SK-N-SH (cell line): ENCODE measurements at regions of chr14 and their contacts with region 1.

Region 1: DNA sequence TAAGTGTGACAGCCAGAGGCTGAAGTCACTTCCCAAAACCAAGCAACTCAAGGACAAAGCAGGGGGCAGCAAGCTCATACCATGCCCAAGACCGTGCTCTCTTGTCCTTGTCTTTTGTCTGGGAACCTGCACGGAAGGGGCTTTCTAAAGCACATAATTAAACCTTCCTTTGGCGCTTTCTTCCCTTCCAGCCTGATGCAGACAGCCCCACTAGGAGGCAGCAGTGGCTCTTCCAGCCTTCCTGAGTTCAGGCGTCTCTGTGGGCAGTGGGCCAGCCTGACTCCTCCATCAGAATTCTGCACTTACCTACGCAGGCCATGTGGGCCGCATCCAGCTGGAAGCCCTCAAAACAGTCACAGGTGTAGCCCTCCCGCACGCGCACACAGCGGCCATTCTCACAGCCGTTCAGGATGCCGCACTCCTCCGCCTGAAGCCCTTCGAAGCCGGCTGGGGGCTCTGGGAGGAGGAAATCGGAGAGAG is 7.6 kb downstream of the ISCA2 start:
- DNase-seq: peak; percentile 87
- H3K4me3 ChIP-seq: peak overlapping the region in 1 of 2 experiments; percentile 49; a peak in 1 of 4 replicates
- H3K27ac ChIP-seq: no peak overlapping the region
- H3K4me1 ChIP-seq: peaks cover 0 to 13% of the 10 kb centered on the region in 2 experiments; a peak in 1 of 4 replicates
- H3K27me3 ChIP-seq: no peaks in the 10 kb centered on the region
- CTCF ChIP-seq: peak; percentile 61
- EP300 ChIP-seq: no peak
- RAD21 ChIP-seq: peak; percentile 91

Region 2: DNA sequence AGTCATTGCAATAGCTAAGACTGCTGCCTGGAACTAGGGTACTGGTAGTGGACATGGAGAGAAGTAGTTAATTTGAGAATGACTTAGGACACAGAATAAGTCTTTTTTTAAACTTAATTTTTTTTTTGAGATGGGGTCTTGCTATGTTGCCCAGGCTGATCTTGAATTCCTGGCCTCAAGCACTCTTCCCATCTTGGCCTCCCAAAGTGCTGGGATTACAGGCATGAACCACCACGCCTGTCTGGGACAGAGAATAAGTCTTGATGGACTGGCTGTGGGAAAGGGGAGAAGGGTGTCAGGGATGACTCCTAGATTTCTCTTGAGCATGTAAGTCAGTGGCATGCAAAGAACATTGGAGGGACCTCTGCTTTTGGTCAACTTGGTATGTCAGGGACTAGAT is 373.5 kb before region 1 on chr14:
- CTCF ChIA-PET with region 1: no interaction called
- POLR2A ChIA-PET with region 1: no interaction called
- DNase-seq: no peak
- H3K4me3 ChIP-seq: no peak overlapping the region
- H3K27ac ChIP-seq: no peak overlapping the region
- H3K4me1 ChIP-seq: no peaks in the 10 kb centered on the region
- H3K27me3 ChIP-seq: no peaks in the 10 kb centered on the region
- CTCF ChIP-seq: no peak
- EP300 ChIP-seq: no peak
- RAD21 ChIP-seq: no peak

Region 3: DNA sequence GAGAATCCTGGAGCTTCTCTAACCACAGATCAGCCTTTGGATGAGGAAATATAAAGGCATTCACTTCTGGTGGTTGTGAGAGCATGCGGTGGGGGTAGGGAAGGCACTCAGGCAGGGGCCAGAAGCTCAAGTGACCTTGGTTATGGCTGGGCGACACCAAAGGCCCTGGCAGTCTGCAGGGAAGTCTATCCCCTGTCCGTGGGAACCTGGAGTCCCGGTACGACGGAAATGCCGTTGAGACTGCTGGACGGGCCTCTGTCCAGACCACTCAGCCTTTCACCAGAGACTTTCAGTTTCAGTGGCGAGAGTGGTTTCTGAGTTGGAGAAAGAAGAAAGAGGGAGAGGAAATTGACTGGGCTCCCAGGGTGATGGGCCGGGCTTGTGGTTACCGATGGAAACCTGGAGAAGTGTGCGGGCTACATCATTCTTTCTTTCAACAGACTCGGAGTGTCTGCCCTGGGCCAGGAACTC is 13.3 kb after region 1 on chr14:
- CTCF ChIA-PET with region 1: interaction called, 36 read pairs
- POLR2A ChIA-PET with region 1: no interaction called
- DNase-seq: no peak
- H3K4me3 ChIP-seq: no peak overlapping the region
- H3K27ac ChIP-seq: peak overlapping the region in 1 of 2 experiments; percentile 10; a peak in 1 of 4 replicates
- H3K4me1 ChIP-seq: peaks cover 0 to 12% of the 10 kb centered on the region in 2 experiments; a peak in 1 of 4 replicates
- H3K27me3 ChIP-seq: no peaks in the 10 kb centered on the region
- CTCF ChIP-seq: no peak
- EP300 ChIP-seq: no peak
- RAD21 ChIP-seq: no peak

Region 4: DNA sequence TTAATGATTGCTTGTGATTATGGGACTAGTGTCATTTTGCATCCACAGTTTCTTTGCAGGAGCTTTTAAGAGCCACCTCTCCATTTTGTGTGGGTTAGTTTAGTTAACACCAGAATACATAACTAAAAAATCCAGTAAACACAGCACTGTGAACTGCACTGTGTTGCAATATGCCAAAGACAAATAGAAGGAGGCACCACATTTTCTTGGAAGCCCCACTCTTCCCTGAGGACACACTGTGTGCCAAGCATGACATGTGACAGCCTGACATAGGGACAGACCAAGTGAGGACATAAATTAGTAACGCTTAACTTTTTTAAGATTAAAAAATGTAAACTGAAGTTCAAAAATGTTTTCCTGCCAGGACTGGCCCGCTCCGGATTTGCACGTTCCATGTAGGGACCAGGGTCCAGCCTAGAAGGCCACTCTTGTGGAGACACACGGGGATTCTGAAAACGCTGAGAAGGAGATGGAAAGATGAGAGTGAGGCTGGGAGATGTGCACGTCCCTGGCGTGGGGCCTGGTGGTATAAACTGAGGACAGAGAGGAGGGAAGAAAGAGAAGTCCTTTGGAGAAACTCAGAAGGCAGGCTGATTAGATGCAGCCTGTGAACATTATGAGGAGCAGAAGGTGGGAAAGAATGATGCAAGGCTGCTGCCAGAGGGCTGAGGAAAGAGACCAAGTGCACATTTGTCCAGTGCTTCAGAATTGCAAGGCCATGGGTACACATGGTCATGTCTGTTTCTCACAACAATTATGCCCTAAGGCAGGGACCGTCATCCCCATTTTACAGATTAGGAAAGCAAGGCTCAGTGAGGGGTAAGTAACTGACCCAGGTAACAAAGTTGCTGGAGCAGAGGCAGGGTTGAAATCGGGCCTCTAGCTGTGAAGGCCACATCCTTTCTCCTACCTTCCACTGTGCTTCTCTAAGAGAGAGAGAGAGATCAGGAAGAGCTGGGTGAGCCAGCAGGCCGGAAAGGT is 37.5 kb after region 1 on chr14:
- CTCF ChIA-PET with region 1: interaction called, 11 read pairs
- POLR2A ChIA-PET with region 1: no interaction called
- DNase-seq: no peak
- H3K4me3 ChIP-seq: no peak overlapping the region
- H3K27ac ChIP-seq: no peak overlapping the region
- H3K4me1 ChIP-seq: peaks cover 0 to 10% of the 10 kb centered on the region in 2 experiments; a peak in 1 of 4 replicates
- H3K27me3 ChIP-seq: no peaks in the 10 kb centered on the region
- CTCF ChIP-seq: no peak
- EP300 ChIP-seq: no peak
- RAD21 ChIP-seq: no peak

Region 5: GRCh38 chr14:74571901-74572725 is 70.9 kb after region 1 on chr14:
- CTCF ChIA-PET with region 1: interaction called, 68 read pairs
- POLR2A ChIA-PET with region 1: no interaction called
- DNase-seq: no peak
- H3K4me3 ChIP-seq: peak overlapping the region in 1 of 2 experiments; percentile 35; a peak in 3 of 4 replicates
- H3K27ac ChIP-seq: peak overlapping the region; percentile 92 to 97
- H3K4me1 ChIP-seq: peaks cover 52 to 92% of the 10 kb centered on the region in 2 experiments
- H3K27me3 ChIP-seq: no peaks in the 10 kb centered on the region
- CTCF ChIP-seq: no peak
- EP300 ChIP-seq: peak; percentile 33 to 96; a peak in 3 of 4 replicates
- RAD21 ChIP-seq: no peak

Region 6: GRCh38 chr14:74618078-74618952 is 117.1 kb after region 1 on chr14:
- CTCF ChIA-PET with region 1: interaction called, 126 read pairs
- POLR2A ChIA-PET with region 1: no interaction called
- DNase-seq: no peak
- H3K4me3 ChIP-seq: 0 out of 4 replicates have a peak overlapping the region, but pooled peaks of 1 of the 2 experiments have one; percentile 10
- H3K27ac ChIP-seq: peak overlapping the region; percentile 72 to 99
- H3K4me1 ChIP-seq: peaks cover 19 to 63% of the 10 kb centered on the region in 2 experiments; a peak in 3 of 4 replicates
- H3K27me3 ChIP-seq: no peaks in the 10 kb centered on the region
- CTCF ChIP-seq: no peak
- EP300 ChIP-seq: peak in 1 of 2 experiments; percentile 17; a peak in 1 of 4 replicates
- RAD21 ChIP-seq: no peak

Region 7: GRCh38 chr14:74641601-74642391 is 140.6 kb after region 1 on chr14:
- CTCF ChIA-PET with region 1: interaction called, 22 read pairs
- POLR2A ChIA-PET with region 1: no interaction called
- DNase-seq: no peak
- H3K4me3 ChIP-seq: no peak overlapping the region
- H3K27ac ChIP-seq: no peak overlapping the region
- H3K4me1 ChIP-seq: peaks cover 0 to 20% of the 10 kb centered on the region in 2 experiments; a peak in 2 of 4 replicates
- H3K27me3 ChIP-seq: no peaks in the 10 kb centered on the region
- CTCF ChIP-seq: no peak
- EP300 ChIP-seq: no peak
- RAD21 ChIP-seq: no peak